PC-3 (cell line): ENCODE measurements at regions of chr1 and their contacts with region 1.

Region 1: GRCh38 chr1:244012202-244012601 is 38.9 kb upstream of the ZBTB18 start:
- DNase-seq: peak; percentile 97
- ATAC-seq: peak; percentile 89
- H3K4me3 ChIP-seq: peak overlapping the region; percentile 50
- H3K27ac ChIP-seq: no peak overlapping the region
- H3K4me1 ChIP-seq: peaks cover 7% of the 10 kb centered on the region
- H3K27me3 ChIP-seq: no peaks in the 10 kb centered on the region
- CTCF ChIP-seq: no peak

Region 2: DNA sequence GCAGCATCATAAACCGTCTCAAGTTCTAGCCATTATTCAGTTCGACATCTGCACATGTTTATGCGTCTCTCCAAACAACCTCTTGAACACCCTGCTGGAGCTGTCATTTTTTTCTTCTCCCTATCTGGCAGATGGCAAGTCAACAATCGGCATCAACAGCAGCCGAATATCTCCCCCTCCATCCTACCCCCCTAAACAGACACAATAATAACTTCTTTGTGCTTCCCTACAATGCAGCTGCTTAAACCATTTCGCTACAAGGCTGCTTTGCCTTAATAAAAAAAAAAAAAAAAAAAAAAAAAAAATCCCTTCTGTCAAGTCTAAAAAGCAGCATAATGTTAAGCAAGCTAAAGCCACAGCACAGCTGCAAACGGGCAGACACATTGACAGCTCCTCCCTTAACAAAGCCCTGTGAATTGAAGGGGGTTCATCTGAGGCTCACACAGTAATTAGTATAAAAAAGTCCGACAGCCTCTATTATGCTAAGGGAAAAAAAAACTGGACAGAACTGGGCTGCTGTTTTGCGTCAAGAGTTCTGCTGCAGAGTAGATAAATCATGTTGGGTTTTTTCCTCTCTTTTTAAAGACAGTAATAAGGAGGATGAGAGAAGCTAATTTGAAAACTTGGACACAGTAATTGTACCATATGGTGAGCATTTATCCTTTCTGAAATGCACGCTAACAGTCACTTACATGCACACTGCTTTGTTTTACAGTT is 298.6 kb before region 1 on chr1:
- CTCF ChIA-PET with region 1: no interaction called
- POLR2A ChIA-PET with region 1: no interaction called
- intact Hi-C with region 1: loop called (anchors 10 kb)
- DNase-seq: no peak
- ATAC-seq: no peak
- H3K4me3 ChIP-seq: no peak overlapping the region
- H3K27ac ChIP-seq: no peak overlapping the region
- H3K4me1 ChIP-seq: peaks cover 32% of the 10 kb centered on the region
- H3K27me3 ChIP-seq: no peaks in the 10 kb centered on the region
- CTCF ChIP-seq: no peak

Region 3: GRCh38 chr1:243842978-243843511 is 169.2 kb before region 1 on chr1:
- CTCF ChIA-PET with region 1: no interaction called
- POLR2A ChIA-PET with region 1: no interaction called
- intact Hi-C with region 1: loop called (anchors 5 kb)
- DNase-seq: peak; percentile 82
- ATAC-seq: peak; percentile 98
- H3K4me3 ChIP-seq: no peak overlapping the region
- H3K27ac ChIP-seq: peak overlapping the region; percentile 23
- H3K4me1 ChIP-seq: peaks cover 35% of the 10 kb centered on the region
- H3K27me3 ChIP-seq: no peaks in the 10 kb centered on the region
- CTCF ChIP-seq: no peak

Region 4: DNA sequence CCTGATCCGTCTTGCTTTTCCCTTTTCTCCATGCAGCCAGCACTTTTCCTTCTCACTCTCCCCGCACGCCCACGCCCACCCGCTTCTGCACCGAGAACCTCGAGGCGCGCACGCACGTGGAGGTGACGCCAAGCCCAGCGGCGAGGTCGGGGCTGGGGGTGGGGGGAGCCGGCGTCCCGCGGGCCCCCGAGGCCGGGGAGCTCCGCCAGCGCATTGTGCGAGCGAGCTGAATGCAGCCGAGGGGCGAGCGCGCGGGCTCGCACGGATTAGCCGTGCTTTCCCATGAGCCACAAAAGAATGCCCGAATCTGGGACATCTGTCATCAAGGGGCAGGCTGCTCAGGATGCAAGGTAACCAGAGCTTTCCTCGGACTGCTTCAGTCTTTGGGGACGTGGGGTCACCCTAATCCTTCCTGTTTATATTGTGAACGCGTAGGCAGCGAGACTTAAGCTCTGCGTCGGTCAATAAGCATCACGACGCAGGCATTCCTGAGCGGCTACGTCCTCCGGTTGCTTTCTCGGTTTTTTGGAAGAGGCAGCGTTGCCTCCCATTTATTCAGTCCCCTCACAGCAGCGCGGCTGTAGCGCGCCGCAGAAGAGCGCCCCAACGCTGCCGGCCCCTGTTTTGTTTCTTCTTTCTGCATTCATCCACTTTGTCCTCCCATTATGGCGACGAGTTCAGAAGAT is 94.9 kb before region 1 on chr1:
- CTCF ChIA-PET with region 1: no interaction called
- POLR2A ChIA-PET with region 1: no interaction called
- intact Hi-C with region 1: loop called (anchors 2 kb)
- DNase-seq: peak; percentile 93
- ATAC-seq: peak; percentile 83
- H3K4me3 ChIP-seq: peak overlapping the region; percentile 70
- H3K27ac ChIP-seq: peak overlapping the region; percentile 43
- H3K4me1 ChIP-seq: peaks cover 29% of the 10 kb centered on the region
- H3K27me3 ChIP-seq: no peaks in the 10 kb centered on the region
- CTCF ChIP-seq: peak; percentile 31; the same call in 1 of the 2 replicates